Activated CD4-positive, alpha-beta T cell treated with anti-CD3 and anti-CD28 coated beads, Interleukin-2, amount 10 ng/mL, durations not matched to agents 24 days and 14 days (primary cell): ENCODE measurements at regions of chr7 and their contacts with region 1.

Region 1: DNA sequence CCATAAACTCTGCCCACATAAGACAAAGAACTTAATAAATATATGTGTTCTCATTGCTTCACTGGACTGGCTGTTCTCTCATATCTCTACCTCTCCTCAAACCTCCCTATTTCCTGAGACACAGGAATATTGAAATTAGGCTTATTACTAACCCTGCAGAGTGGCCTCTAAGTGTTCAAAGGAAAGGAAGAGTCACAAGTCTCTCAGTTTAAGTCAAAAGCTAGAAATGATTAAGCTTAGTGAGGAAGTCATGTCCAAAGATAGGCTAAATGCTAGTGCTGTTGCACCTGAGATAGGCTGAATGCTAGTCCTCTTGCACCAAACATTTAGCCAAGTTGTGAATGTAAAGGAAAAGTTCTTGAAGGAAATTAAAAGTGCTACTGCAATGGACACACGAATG is 41.1 kb downstream of the GNAI1 start:
- DNase-seq: no peak
- H3K4me3 Mint-ChIP-seq: no peak overlapping the region
- H3K27ac Mint-ChIP-seq: peak overlapping the region; percentile 41
- H3K4me1 Mint-ChIP-seq: peaks cover 13% of the 10 kb centered on the region
- H3K27me3 Mint-ChIP-seq: no peaks in the 10 kb centered on the region

Region 2: DNA sequence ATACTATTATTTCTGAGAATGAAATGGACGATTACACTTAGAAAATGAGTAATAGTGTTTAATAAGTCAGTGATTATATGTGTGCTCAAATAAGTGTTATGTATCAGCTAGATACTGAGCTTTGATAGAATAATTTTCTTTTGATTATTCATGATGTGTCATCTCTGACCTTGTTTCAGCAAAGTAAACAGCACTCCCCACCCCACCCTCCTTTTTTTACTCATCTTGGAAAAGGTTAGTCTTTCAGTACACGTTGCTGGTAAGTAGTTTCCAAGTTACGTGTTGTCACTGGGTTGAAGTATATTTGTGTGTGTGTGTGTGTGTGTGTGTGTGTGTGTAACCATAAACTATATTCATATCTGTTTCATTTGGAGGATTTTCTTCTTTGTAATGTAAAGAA is 43.0 kb after region 1 on chr7:
- intact Hi-C with region 1: loop called (anchors 1 kb)
- DNase-seq: no peak
- H3K4me3 Mint-ChIP-seq: no peak overlapping the region
- H3K27ac Mint-ChIP-seq: no peak overlapping the region
- H3K4me1 Mint-ChIP-seq: peaks cover 9% of the 10 kb centered on the region
- H3K27me3 Mint-ChIP-seq: no peaks in the 10 kb centered on the region

Region 3: DNA sequence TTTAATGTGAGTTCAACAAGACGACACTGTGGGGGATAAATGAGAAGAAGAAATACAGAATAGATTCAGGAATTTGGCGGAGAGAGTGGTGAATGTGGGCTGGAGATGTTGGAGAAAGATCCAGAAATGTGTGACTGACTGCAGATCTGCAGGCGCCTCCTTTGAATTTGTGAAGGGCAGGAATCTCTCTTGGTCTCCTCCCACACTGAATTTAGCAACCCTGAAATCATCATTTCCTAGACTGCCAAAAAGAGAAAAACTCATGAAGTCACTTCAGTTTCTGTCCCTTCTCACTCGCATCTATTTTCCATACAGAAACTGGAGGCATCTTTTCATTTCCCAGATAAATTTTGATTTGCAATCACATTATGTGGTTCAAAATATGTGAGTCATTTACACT is 87.6 kb after region 1 on chr7:
- intact Hi-C with region 1: no loop called
- DNase-seq: no peak
- H3K4me3 Mint-ChIP-seq: no peak overlapping the region
- H3K27ac Mint-ChIP-seq: no peak overlapping the region
- H3K4me1 Mint-ChIP-seq: no peaks in the 10 kb centered on the region
- H3K27me3 Mint-ChIP-seq: no peaks in the 10 kb centered on the region